Tibial artery (tissue), 4 donors: ENCODE measurements at regions of chr6 and their contacts with region 1.

Region 1: DNA sequence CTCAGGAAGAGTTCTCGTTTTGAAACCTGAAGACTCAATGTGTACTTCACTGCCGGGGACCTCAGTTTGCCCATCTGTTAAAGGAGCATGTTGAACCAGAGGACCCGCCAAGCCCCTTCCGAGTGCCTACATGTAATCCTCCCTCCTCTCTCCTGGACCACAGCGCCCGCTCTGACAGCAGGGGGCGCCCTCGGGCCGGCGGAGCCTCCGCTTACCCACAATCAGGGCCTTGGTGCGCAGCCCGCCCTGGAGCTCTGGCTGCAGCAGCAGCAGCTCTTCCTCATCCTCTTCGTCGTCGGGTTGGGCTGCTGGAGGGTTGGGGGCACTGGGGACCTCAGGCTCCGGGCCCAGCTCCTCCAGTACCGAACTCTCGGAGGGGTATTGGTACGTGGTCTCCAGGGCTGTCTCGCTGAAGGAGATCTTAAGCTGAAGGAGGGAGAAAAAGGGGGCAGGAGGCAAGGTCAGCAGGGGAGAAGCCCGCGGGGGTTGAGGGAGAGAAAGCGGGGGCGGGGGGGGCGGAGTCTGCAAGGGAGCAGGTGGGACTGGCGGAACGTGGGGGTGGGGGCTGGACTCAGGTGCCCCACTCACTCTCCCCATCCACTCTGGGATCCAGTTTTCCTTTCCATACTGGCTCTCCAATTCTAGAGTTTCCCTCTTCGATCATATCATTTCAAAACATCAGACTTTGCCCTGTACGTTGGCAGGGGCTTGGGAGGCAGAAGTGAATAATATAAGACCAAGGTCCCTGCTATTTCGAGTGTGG is 6.3 kb upstream of the DHX16 start:
- DNase-seq: peak; percentile 82 to 92
- H3K4me3 ChIP-seq: peak overlapping the region; percentile 15 to 64
- H3K27ac ChIP-seq: peak overlapping the region; percentile 94 to 100
- H3K4me1 ChIP-seq: peaks cover 4 to 54% (median 46%) of the 10 kb centered on the region in 4 donors
- H3K27me3 ChIP-seq: no peaks in the 10 kb centered on the region
- CTCF ChIP-seq: peak; percentile 96

Region 2: DNA sequence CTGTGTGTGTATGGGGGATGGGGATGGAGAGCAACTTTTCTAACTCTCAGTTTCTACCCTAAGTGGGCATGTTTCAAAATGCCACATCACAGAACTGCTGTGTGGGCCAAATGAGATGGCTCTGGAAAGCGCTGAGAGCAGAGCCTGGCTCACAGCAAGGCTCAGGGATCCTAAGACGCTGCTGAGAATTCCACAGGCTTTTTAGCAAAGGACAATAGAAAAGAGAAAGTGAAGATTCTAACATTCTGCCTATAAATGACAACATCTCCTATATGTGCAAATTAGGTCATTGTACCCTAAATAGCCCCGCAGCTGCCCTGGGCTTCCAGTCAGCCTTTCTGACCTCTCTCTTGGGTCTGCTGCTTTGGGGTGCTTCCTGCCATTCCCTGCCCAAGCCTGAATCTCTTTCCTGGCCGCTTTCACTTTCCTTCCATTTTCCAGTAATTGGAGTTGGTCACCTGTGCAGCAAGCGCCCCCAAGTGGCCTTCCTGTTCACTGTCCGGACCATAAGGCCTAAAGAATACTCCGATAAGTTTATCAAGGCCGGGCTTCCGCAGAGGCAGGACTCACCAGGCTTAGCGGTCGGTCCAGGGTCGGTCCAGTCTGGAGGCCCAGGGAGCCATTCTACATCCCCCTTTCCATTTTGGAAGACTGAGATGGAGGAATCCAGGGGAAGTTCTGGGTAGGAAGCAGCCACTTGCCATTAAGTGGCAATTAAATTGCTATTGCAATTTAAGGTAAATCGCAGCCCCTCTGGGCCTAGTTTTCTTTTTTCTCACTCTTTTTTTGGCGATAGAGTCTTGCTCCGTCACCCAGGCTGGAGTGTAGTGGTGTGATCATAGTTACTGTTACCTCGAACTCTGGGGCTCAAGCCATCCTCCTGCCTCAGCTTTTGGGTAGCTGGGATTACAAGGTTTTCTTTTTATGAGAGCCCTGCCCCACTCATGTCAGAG is 198.6 kb after region 1 on chr6:
- intact Hi-C with region 1: loop called (anchors 5 kb)
- DNase-seq: peak; percentile 94 to 95
- H3K4me3 ChIP-seq: peak overlapping the region; percentile 44 to 46
- H3K27ac ChIP-seq: peak overlapping the region; percentile 71 to 85
- H3K4me1 ChIP-seq: peaks cover 0 to 40% (median 16%) of the 10 kb centered on the region in 4 donors
- H3K27me3 ChIP-seq: no peaks in the 10 kb centered on the region
- CTCF ChIP-seq: peak; percentile 87 to 95

Region 3: GRCh38 chr6:30974488-30975252 is 295.5 kb after region 1 on chr6:
- intact Hi-C with region 1: no loop called
- DNase-seq: no peak
- H3K4me3 ChIP-seq: no peak overlapping the region
- H3K27ac ChIP-seq: no peak overlapping the region
- H3K4me1 ChIP-seq: peaks cover 0 to 7% (median 0%) of the 10 kb centered on the region in 4 donors
- H3K27me3 ChIP-seq: peaks cover 0 to 13% of the 10 kb centered on the region in 2 donors
- CTCF ChIP-seq: no peak